Ascending aorta (tissue), 2 donors: ENCODE measurements at regions of chr20 and their contacts with region 1.

Region 1: DNA sequence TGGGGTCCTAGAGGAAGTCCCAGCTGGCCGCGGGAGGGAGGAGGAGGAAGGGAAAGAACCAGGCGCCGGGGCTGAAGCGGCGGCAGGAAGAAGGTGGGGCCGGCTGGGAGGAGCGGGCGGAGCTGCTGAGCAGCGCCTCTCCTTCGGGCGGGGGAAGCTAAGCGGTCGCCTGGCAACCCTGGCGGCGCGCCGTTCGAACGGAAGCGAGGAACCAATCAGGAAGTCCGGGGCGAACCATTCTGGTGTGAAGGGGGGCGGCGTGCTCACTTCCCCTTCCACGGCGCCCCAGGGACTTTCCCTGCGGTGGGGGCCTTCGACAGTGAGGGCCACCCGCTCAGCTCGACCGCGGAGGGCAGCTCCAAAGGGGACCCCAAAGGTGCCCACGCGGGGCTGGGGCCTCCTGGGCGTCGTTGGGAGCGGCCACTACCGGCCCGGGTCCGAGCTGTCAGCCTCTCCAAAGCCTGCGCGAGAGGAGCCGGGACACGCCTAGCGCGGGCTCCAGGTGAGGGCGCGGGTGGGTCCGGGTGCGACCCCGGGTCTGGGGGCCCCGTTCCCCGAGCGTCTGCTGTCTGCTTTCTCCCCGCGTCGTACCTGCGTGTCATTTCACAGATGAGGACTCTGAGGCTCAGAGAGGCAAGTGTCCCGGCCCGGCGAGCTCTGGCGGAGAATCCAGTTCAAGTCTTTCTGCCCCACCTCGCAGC is at the start of gene FAM110A:
- DNase-seq: peak; percentile 87 to 97
- H3K4me3 ChIP-seq: peak within 1 kb of the TSS; percentile 90
- H3K27ac ChIP-seq: peak within 1 kb of the TSS; percentile 72 to 78
- H3K4me1 ChIP-seq: peaks cover 4 to 17% of the 10 kb centered on the region in 2 donors
- H3K27me3 ChIP-seq: no peaks in the 10 kb centered on the region
- CTCF ChIP-seq: no peak
- total RNA-seq, gene FAM110A: 9.7 TPM

Region 2: DNA sequence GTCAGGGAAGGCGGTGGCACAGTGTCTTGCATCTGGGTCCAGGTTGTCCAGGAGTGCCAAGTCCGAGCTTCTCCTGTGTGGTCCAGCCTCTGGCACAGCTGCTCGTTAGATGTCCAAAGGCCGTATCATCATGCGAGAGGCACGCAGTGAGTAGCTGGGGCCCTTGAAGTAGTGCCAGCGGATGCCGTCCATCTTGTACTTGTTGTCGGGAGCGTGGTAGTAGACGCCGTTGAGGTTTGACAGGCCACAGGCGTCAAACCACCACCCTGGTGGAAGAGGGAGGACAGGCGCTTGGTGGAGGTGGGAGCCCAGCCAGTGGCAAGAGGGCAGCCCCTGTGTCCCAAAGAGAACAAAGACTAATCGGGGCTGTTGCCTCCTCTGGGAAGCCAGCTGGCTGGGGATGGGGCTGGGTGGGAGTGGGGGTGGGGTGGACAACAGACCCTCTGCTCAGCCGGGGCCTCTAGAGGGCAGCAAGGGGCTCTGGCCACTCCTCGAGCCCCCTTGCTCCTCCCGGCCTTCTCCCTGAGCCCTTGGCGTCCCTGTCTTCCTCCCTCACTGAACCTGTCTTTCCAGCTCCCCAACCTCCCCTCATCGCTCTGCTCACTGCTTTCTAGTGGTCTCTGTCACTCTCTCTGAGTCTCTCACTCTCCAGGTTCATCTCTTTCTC is 39.4 kb after region 1 on chr20:
- intact Hi-C with region 1: no loop called
- DNase-seq: no peak
- H3K4me3 ChIP-seq: no peak overlapping the region
- H3K27ac ChIP-seq: no peak overlapping the region
- H3K4me1 ChIP-seq: no peaks in the 10 kb centered on the region
- H3K27me3 ChIP-seq: no peaks in the 10 kb centered on the region
- CTCF ChIP-seq: no peak

Region 3: GRCh38 chr20:1816384-1817381 is 983.1 kb after region 1 on chr20:
- intact Hi-C with region 1: loop called (anchors 10 kb)
- DNase-seq: no peak
- H3K4me3 ChIP-seq: peak overlapping the region in 1 of 2 donors; percentile 37
- H3K27ac ChIP-seq: peak overlapping the region; percentile 80 to 92
- H3K4me1 ChIP-seq: peaks cover 34 to 65% of the 10 kb centered on the region in 2 donors
- H3K27me3 ChIP-seq: no peaks in the 10 kb centered on the region
- CTCF ChIP-seq: no peak